ENCODE measurements at regions of chr6 and their contacts with region 1.

Region 1: DNA sequence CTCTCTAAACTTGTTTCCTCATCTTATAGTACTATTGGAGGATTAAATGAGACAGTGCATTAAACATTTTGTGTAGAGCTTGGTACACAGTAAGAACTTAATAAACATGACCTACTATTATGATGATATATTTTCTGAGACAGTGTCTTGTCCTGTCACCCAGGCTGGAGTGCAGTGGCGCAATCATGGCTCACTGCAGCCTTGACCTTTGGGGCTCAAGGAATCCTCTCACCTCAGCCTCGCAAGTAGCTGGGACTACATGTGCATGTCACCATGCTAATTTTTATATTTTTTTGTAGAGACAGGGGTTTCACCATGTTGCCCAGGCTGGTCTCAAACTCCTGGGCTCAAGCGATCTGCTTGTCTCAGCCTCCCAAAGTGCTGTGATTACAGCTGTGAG is 72.1 kb downstream of the LYRM4 start:
- DNase-seq: no peak
- H3K4me3 ChIP-seq: no peak overlapping the region
- H3K27ac ChIP-seq: no peak overlapping the region
- H3K4me1 ChIP-seq: peaks cover 7% of the 10 kb centered on the region
- H3K27me3 ChIP-seq: no peaks in the 10 kb centered on the region
- CTCF ChIP-seq: no peak

Region 2: DNA sequence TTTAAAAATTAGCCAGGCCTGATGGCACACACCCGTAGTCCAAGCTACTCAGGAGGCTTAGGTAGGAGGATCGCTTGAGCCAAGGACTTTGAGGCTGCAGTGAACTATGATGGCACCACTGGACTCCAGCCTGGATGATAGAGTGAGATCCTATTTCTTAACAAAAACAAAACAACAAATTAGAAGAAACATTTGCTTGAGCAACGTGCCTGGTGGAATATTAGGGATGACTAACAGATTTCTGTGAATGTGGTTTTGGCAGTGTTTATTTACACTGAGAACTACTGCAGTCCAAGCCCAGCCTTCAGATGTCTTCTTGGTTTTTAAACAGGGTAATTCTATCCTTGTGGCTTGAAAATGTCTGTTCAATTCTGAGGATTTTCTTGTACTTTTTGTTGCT is 94.3 kb before region 1 on chr6:
- CTCF ChIA-PET with region 1: no interaction called
- dilution Hi-C with region 1: loop called (anchors 5 kb)
- in situ Hi-C with region 1: no loop called
- intact Hi-C with region 1: no loop called
- DNase-seq: peak; percentile 71
- H3K4me3 ChIP-seq: no peak overlapping the region
- H3K27ac ChIP-seq: no peak overlapping the region
- H3K4me1 ChIP-seq: peaks cover 4% of the 10 kb centered on the region
- H3K27me3 ChIP-seq: no peaks in the 10 kb centered on the region
- CTCF ChIP-seq: no peak

Measured in mammary epithelial cell (primary cell).